HEK293 (cell line): ENCODE measurements at regions of chr1 and their contacts with region 1.

Region 1: DNA sequence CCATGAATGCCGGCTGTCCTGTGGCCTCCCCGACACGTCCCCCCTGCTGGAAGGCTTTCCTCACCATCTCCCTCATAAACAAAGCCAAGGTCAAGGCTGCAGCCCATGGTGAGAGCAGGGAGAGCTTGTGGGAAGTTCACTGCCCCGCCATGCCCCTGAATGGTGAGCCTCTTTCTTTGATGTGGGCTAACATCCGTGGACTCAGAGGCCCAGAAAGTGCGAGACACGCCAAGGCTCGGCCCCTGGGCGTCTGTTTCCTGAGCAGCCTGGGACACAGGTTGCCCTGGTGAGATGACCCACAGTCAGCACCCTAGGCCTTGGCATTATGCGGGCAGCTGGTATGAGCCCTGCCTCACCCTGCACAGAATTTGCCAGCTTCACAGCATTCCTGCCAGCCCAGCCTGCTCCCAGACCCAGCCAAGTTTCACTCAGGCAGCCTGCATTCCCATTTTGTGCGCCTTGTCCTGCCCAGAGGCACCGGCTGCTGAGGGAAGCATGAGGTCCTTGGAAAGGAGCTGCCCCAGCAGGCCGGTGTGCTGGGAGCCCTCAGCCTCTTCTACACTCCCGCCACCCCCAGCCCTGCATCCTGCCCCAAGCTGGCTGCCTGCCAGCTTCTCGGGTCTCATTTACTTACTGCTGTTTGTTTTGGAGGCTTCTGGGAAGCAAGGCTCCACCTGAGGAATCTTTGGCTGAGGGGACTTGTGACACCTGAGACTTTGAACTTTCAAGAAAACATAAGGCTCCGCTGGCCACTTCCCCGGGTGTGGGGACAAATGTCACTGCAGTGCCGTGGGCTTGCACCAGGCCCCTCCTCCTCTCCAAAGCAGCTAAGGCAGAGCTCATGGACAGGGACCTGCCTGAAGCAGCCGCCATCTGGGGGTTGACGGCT is 31.9 kb downstream of the NEK2 start:
- H3K4me3 ChIP-seq: no peak overlapping the region
- H3K27ac ChIP-seq: no peak overlapping the region; the same call in 1 of the 2 replicates
- H3K4me1 ChIP-seq: peaks cover 8% of the 10 kb centered on the region
- CTCF ChIP-seq: no peak

Region 2: DNA sequence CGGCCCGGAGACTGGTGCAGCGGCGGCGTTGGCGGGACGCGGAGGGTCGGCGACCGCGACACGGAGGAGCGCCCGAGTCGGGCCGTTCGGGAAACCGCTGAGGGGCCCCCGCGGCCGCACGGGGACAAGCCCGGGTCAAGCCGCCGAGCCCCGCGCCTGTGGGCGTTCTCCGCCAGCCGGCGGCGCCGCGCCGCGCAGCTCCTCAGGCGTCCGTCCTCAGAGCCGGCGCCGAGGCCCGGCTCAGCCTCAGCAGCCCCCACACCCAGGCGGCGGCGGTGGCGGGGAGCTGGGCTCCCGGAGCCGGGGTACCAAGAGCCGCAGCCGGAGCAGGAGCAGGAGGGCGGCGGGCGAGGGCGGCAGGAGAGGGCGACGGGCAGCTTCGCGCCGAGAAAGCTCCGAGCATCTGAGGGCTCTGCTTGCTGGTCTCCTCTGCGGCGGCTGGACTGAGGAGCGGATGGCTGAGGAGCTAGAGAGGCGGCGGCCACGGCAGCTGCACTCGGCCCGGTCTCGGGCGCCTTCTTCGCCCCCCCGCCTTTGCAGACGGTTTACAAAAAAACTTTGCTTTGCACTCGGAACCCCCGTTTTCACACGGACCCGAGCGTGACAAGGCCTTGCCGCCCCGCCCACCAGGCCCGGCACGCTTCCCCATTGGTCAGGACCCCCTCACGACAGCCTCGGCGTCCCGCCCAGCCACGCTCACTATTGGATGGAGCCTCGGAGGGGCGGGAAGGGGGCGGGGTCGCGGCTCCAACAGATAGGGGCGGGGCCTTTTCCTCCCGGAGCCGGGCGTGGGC is 64.7 kb before region 1 on chr1 and contains the start of gene SLC30A1:
- CTCF ChIA-PET with region 1: interaction called, 4 read pairs
- POLR2A ChIA-PET with region 1: interaction called, 11 read pairs
- H3K4me3 ChIP-seq: peak within 1 kb of the TSS; percentile 68
- H3K27ac ChIP-seq: peak within 1 kb of the TSS; percentile 91
- H3K4me1 ChIP-seq: peaks cover 3% of the 10 kb centered on the region
- CTCF ChIP-seq: no peak

Region 3: GRCh38 chr1:211870156-211870555 is 226.6 kb after region 1 on chr1:
- CTCF ChIA-PET with region 1: no interaction called
- POLR2A ChIA-PET with region 1: no interaction called
- H3K4me3 ChIP-seq: no peak overlapping the region
- H3K27ac ChIP-seq: no peak overlapping the region
- H3K4me1 ChIP-seq: no peaks in the 10 kb centered on the region
- CTCF ChIP-seq: no peak